ENCODE measurements at regions of chr2 and their contacts with region 1.

Region 1: GRCh38 chr2:85826990-85827878 is 61.6 kb downstream of the ST3GAL5 start:
- DNase-seq: peak; percentile 88
- H3K4me3 ChIP-seq: peak overlapping the region in 2 of 4 donors; percentile 18 to 21
- H3K27ac ChIP-seq: no peak overlapping the region
- H3K4me1 ChIP-seq: peaks cover 0 to 12% (median 6%) of the 10 kb centered on the region in 4 donors
- H3K27me3 ChIP-seq: no peaks in the 10 kb centered on the region
- CTCF ChIP-seq: peak; percentile 90 to 95 (median 92)
- EP300 ChIP-seq: no peak
- POLR2A ChIP-seq: no peak

Region 2: GRCh38 chr2:85678794-85679672 is 148.2 kb before region 1 on chr2:
- intact Hi-C with region 1: no loop called
- DNase-seq: peak; percentile 96
- H3K4me3 ChIP-seq: no peak overlapping the region
- H3K27ac ChIP-seq: peak overlapping the region in 1 of 4 donors; percentile 9
- H3K4me1 ChIP-seq: peaks cover 0 to 12% (median 8%) of the 10 kb centered on the region in 4 donors
- H3K27me3 ChIP-seq: no peaks in the 10 kb centered on the region
- CTCF ChIP-seq: peak; percentile 72 to 98 (median 92)
- EP300 ChIP-seq: no peak
- POLR2A ChIP-seq: no peak

Region 3: DNA sequence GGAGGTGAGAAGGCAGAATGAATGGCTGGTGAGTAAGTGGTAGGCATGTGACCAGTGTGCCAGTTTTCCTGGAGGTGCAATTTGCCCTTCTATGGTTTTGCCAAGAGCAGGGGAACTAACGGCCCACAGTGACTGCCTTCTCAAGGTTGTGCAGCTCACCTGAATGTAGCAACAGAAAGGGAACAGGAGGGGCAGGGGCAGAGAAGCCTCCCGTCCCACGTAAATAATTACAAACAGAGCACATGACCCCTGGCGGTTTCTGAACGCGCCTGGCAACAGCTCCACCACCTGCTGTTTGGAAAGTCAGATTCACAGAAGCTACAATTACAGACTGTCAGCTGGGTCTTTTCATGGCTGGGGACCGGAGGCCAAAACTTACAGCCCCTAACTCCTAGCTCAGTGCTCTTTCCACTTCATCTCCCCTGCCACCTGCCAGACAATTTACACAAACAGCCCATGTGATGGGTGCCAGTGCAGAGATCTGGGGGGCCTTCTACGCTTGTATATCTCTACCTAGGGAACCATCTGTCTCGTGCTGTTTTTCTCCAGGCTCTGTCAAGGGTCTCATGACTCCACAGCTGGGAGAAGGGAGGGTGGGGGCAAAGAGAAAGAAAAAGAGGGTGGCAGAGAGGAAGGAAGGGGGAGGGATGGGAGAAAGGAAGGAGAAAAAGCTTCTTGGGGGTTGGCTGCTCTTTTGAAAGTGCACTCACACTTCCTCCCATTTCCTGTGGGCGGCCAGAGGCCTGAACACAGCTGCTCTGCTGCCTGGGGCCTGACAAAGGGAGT is 208.8 kb after region 1 on chr2:
- intact Hi-C with region 1: loop called (anchors 2 kb)
- DNase-seq: peak; percentile 93
- H3K4me3 ChIP-seq: no peak overlapping the region
- H3K27ac ChIP-seq: peak overlapping the region; percentile 74 to 84 (median 80)
- H3K4me1 ChIP-seq: peaks cover 0 to 39% (median 29%) of the 10 kb centered on the region in 4 donors
- H3K27me3 ChIP-seq: no peaks in the 10 kb centered on the region
- CTCF ChIP-seq: peak; percentile 14 to 44 (median 41)
- EP300 ChIP-seq: peak in 1 of 4 donors; percentile 9
- POLR2A ChIP-seq: no peak

Region 4: GRCh38 chr2:86079981-86080911 is 253.0 kb after region 1 on chr2:
- intact Hi-C with region 1: loop called (anchors 1 kb)
- DNase-seq: peak; percentile 87
- H3K4me3 ChIP-seq: no peak overlapping the region
- H3K27ac ChIP-seq: no peak overlapping the region
- H3K4me1 ChIP-seq: no peaks in the 10 kb centered on the region
- H3K27me3 ChIP-seq: no peaks in the 10 kb centered on the region
- CTCF ChIP-seq: peak; percentile 43 to 73 (median 60)
- EP300 ChIP-seq: no peak
- POLR2A ChIP-seq: no peak

Measured in sigmoid colon (tissue), 7 donors.